ENCODE measurements at regions of chr1 and their contacts with region 1.

Region 1: GRCh38 chr1:56301847-56302246 is 277.5 kb downstream of the PLPP3 start:
- DNase-seq: peak; percentile 85
- ATAC-seq: peak; percentile 27
- H3K4me3 ChIP-seq: peak overlapping the region; percentile 42; the same call in 1 of the 2 replicates
- H3K27ac ChIP-seq: peak overlapping the region; percentile 68
- H3K4me1 ChIP-seq: peaks cover 28% of the 10 kb centered on the region
- H3K27me3 ChIP-seq: no peaks in the 10 kb centered on the region
- CTCF ChIP-seq: no peak

Region 2: DNA sequence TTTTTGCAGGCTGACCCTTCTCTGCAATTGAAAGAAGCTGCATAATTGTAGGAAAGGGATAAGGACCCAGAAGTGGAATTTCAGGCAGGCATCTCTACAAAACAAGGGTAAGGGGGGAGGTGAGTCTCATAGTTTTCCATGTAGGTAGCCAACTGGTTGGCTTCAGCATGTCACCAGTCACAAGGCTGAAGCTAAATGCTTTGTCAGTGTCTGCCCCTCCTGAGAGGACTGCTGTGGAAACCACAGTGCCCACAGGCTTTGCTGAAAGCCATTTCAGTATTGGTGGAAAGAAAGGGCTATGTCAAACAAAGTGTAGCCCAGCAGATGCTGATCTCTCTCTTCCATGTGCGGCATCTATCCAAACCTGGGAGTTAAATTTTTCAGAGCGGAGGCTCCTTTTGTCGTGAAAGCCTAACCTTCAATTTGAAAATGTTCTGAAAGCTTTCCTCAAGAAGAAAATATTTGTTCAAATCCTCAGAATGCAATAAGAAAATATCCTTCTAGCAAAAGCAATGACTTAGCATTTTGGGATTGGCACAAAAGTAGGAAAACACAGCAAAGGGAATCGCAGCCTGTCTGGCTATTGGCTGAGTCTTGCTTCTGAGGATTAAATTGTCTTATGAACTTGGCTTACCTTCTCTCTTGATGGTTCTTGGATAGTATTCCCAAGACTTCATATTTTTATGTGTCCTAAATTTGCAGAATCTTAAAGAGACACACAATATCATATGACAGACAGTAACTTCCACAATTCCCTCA is 314.2 kb before region 1 on chr1:
- CTCF ChIA-PET with region 1: no interaction called
- POLR2A ChIA-PET with region 1: no interaction called
- intact Hi-C with region 1: no loop called
- DNase-seq: no peak
- ATAC-seq: no peak
- H3K4me3 ChIP-seq: no peak overlapping the region
- H3K27ac ChIP-seq: no peak overlapping the region
- H3K4me1 ChIP-seq: no peaks in the 10 kb centered on the region
- H3K27me3 ChIP-seq: no peaks in the 10 kb centered on the region
- CTCF ChIP-seq: no peak

Region 3: DNA sequence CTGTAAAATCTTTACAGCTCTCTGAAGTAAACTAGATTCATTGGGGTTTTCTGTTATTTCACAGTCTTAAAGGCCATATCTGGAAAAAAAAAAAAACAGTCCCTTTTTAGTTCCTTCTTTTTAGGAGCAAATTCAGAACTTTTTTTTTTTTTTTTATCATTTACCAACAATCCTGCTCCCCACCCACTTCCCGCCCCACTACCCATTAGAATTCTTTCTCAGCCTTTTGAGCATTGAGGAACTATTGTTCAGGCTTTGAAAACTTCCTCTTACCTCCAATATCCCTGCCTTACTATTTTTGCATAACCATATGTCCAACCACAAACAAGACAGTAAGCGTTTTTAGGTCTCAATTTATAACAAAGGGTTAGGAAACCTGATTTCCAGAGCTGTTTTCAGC is 52.6 kb before region 1 on chr1:
- CTCF ChIA-PET with region 1: no interaction called
- POLR2A ChIA-PET with region 1: no interaction called
- intact Hi-C with region 1: no loop called
- DNase-seq: no peak
- ATAC-seq: no peak
- H3K4me3 ChIP-seq: no peak overlapping the region
- H3K27ac ChIP-seq: no peak overlapping the region
- H3K4me1 ChIP-seq: no peaks in the 10 kb centered on the region
- H3K27me3 ChIP-seq: no peaks in the 10 kb centered on the region
- CTCF ChIP-seq: no peak

Region 4: DNA sequence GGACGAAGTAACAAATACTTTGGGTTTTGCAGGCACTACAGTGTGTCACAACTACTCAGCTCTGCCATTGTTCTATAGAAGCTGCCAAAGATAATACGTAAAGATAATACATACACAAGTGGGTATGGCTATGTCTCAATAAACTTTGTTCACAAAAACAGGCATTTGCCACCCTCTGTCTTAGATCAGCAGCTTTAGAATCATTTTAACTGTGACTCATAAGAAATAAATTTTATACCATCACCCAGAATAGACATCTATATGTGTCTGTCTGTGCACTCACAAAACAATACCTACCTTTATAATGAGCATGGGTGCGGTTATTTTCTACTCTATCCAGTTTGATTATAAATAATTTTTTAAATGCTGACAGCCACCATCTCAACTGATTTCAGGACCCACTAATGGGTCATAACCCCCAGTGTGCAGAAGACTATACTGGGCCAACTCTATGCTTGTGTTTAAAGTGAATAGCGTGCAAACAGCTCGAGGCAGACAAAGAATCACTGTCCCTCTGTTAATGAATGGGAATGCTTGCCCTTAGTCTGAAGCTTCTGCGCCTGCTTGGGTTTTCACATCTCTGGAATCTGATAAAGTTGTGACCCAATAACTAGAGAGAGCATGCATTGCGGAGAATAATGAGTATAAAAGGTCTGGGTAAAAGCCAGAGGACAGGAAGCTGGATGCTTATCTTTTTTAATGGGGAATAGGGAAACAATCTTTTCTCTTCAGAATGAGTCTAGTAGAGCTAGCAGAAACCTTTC is 61.3 kb after region 1 on chr1:
- CTCF ChIA-PET with region 1: no interaction called
- POLR2A ChIA-PET with region 1: no interaction called
- intact Hi-C with region 1: no loop called
- DNase-seq: peak; percentile 70
- ATAC-seq: peak; percentile 98
- H3K4me3 ChIP-seq: no peak overlapping the region
- H3K27ac ChIP-seq: peak overlapping the region; percentile 32
- H3K4me1 ChIP-seq: peaks cover 22% of the 10 kb centered on the region
- H3K27me3 ChIP-seq: no peaks in the 10 kb centered on the region
- CTCF ChIP-seq: no peak

Region 5: GRCh38 chr1:56484695-56485094 is 182.8 kb after region 1 on chr1:
- CTCF ChIA-PET with region 1: no interaction called
- POLR2A ChIA-PET with region 1: no interaction called
- intact Hi-C with region 1: loop called (anchors 5 kb)
- DNase-seq: no peak
- ATAC-seq: no peak
- H3K4me3 ChIP-seq: no peak overlapping the region
- H3K27ac ChIP-seq: no peak overlapping the region
- H3K4me1 ChIP-seq: no peaks in the 10 kb centered on the region
- H3K27me3 ChIP-seq: no peaks in the 10 kb centered on the region
- CTCF ChIP-seq: no peak

Region 6: GRCh38 chr1:56838759-56839158 is 536.9 kb after region 1 on chr1:
- CTCF ChIA-PET with region 1: no interaction called
- POLR2A ChIA-PET with region 1: no interaction called
- intact Hi-C with region 1: no loop called
- DNase-seq: no peak
- ATAC-seq: no peak
- H3K4me3 ChIP-seq: no peak overlapping the region
- H3K27ac ChIP-seq: no peak overlapping the region
- H3K4me1 ChIP-seq: no peaks in the 10 kb centered on the region
- H3K27me3 ChIP-seq: peaks cover 71% of the 10 kb centered on the region
- CTCF ChIP-seq: no peak

Measured in PC-3 (cell line).